B cell (primary cell): ENCODE measurements at regions of chr20 and their contacts with region 1.

Region 1: GRCh38 chr20:63542696-63543517 is 4.6 kb downstream of the SRMS start:
- DNase-seq: peak; percentile 80
- ATAC-seq: peak; percentile 40
- H3K4me3 ChIP-seq: peak overlapping the region in 2 of 5 experiments; percentile 13 to 39
- H3K4me3 Mint-ChIP-seq: peak overlapping the region; percentile 74
- H3K27ac ChIP-seq: peak overlapping the region; percentile 67 to 78
- H3K27ac Mint-ChIP-seq: peak overlapping the region; percentile 89
- H3K4me1 ChIP-seq: peaks cover 44 to 75% of the 10 kb centered on the region in 2 donors
- H3K4me1 Mint-ChIP-seq: peaks cover 58% of the 10 kb centered on the region
- H3K27me3 ChIP-seq: peaks cover 0 to 2% (median 0%) of the 10 kb centered on the region in 4 experiments
- H3K27me3 Mint-ChIP-seq: no peaks in the 10 kb centered on the region
- CTCF ChIP-seq: no peak

Region 2: DNA sequence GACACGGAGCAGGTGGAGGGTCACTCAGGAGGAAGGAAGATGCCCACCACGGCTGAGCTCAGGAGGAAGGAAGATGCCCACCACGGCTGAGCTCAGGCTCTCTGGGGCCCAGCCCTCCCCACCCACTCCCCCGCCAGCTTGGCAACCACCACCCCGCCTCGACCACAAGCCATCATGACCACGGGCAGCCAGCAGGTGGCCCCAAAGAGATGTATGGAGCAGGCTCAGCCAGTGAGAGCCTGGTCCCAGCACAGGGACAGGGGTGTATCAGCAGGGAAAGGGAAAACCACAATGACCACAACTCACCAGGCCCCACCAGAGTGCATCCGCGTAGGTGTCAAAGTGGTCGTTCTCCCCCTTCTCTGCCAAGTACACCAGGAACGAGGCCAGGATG is 100.8 kb before region 1 on chr20:
- CTCF ChIA-PET with region 1: no interaction called
- POLR2A ChIA-PET with region 1: no interaction called
- intact Hi-C with region 1: no loop called
- DNase-seq: peak; percentile 57
- ATAC-seq: peak; percentile 65
- H3K4me3 ChIP-seq: no peak overlapping the region
- H3K4me3 Mint-ChIP-seq: no peak overlapping the region
- H3K27ac ChIP-seq: no peak overlapping the region
- H3K27ac Mint-ChIP-seq: peak overlapping the region; percentile 53
- H3K4me1 ChIP-seq: peaks cover 10 to 27% of the 10 kb centered on the region in 2 donors
- H3K4me1 Mint-ChIP-seq: peaks cover 15% of the 10 kb centered on the region
- H3K27me3 ChIP-seq: peaks cover 0 to 35% (median 1%) of the 10 kb centered on the region in 4 experiments
- H3K27me3 Mint-ChIP-seq: peaks cover 10% of the 10 kb centered on the region
- CTCF ChIP-seq: no peak

Region 3: GRCh38 chr20:63567386-63568169 is 24.7 kb after region 1 on chr20:
- CTCF ChIA-PET with region 1: interaction called, 17 read pairs
- POLR2A ChIA-PET with region 1: interaction called, 10 read pairs
- intact Hi-C with region 1: no loop called
- DNase-seq: peak; percentile 82
- ATAC-seq: peak; percentile 73
- H3K4me3 ChIP-seq: peak overlapping the region in 4 of 5 experiments; percentile 44 to 64 (median 49)
- H3K4me3 Mint-ChIP-seq: peak overlapping the region; percentile 88
- H3K27ac ChIP-seq: peak overlapping the region; percentile 46 to 65
- H3K27ac Mint-ChIP-seq: peak overlapping the region; percentile 83
- H3K4me1 ChIP-seq: peaks cover 34 to 48% of the 10 kb centered on the region in 2 donors
- H3K4me1 Mint-ChIP-seq: peaks cover 29% of the 10 kb centered on the region
- H3K27me3 ChIP-seq: no peaks in the 10 kb centered on the region
- H3K27me3 Mint-ChIP-seq: no peaks in the 10 kb centered on the region
- CTCF ChIP-seq: no peak

Region 4: DNA sequence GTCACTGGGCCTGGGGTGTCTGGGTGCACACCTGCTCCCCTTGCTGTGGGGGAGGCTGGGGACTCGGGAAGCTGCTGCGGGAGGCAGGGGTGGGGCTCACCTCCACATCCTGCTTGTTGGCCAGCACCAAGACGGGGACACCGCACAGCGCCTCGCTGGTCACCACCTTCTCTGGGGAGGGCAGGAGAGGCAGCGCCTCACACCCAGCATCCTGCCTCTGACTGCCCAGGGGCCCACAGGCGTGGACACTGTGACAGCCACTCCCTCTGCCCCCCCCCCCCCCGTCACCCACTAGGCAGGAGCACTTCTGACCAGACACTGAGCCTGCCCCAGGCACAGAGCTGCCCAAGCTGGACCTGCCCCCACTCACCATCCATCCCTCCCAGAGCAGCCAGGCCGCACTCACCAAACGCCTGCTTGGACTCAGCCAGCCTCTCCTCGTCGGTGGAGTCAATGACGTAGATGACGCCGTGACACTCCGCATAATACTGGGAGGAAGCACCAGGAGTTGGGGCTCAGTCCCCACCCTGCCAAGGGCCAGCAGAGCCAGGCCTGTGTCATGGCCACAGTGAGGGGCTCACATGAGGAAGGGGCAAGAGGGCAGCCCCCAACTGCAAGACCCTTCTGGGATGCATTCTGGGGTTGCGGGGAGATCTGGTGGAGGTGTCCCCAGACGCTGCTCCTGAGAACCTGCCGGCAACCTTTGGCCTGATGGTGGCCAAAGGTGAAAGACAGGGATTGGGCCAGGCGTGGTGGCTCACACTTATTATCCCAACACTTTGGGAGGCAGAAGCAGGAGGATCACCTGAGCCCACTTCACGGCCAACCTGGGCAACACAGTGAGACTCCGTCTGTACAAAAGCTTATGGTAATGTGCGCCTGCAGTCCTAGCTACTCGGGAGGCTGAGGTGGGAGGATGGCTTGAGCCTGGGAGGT is 159.1 kb after region 1 on chr20:
- CTCF ChIA-PET with region 1: no interaction called
- POLR2A ChIA-PET with region 1: no interaction called
- intact Hi-C with region 1: no loop called
- DNase-seq: no peak
- ATAC-seq: no peak
- H3K4me3 ChIP-seq: no peak overlapping the region
- H3K4me3 Mint-ChIP-seq: no peak overlapping the region
- H3K27ac ChIP-seq: no peak overlapping the region
- H3K27ac Mint-ChIP-seq: no peak overlapping the region
- H3K4me1 ChIP-seq: peaks cover 17 to 18% of the 10 kb centered on the region in 2 donors
- H3K4me1 Mint-ChIP-seq: peaks cover 14% of the 10 kb centered on the region
- H3K27me3 ChIP-seq: no peaks in the 10 kb centered on the region
- H3K27me3 Mint-ChIP-seq: no peaks in the 10 kb centered on the region
- CTCF ChIP-seq: no peak